Brain microvascular endothelial cell (primary cell): ENCODE measurements at regions of chr2 and their contacts with region 1.

Region 1: GRCh38 chr2:171160119-171160955 is at the start of gene TLK1:
- DNase-seq: peak; percentile 41
- H3K4me3 ChIP-seq: peak within 1 kb of the TSS; percentile 83
- H3K27ac ChIP-seq: peak within 1 kb of the TSS; percentile 93
- H3K27me3 ChIP-seq: no peaks in the 10 kb centered on the region
- CTCF ChIP-seq: no peak

Region 2: DNA sequence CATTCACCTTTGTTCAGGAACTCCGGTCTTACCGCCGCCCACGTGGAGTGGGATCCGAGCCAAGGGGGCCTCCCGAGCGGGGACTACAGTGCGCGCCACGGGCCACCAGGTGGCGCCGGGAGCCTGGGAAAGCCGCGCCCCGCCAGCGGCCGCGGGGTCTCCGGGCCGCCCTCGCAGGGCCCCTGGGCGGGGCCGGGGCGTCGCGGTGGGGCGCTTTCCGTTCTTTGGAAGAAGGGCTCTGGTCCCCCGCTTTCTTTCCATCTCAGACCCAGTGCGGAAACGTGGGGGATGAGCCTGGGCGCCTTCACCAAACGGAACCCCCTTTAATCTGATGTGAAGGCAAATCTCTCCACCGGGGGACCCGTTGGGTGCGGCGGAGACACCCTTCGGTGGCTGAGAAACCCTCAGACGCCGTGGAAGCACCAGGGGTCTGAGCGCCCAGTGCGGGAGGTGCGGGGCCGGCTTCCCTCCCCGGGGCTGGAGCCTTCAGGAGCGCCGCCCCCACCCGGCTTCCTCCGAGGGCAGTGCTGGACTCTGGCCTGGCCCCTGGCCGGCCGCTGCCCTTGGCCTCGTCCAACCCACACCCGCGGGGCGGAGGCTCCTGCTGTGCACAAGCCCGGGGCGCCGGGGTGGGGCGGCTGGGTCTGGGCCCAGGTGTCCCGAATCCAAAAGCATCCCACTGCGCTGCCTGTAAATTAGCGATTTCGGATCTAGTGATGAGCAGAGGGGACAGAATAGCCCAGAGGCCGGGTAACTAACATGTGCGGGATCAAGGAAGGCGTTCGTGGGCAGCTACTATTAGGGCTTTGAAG is 186.6 kb before region 1 on chr2:
- in situ Hi-C with region 1: loop called (anchors 25 kb)
- DNase-seq: peak; percentile 52
- H3K4me3 ChIP-seq: peak overlapping the region; percentile 69
- H3K27ac ChIP-seq: peak overlapping the region; percentile 69
- H3K27me3 ChIP-seq: no peaks in the 10 kb centered on the region
- CTCF ChIP-seq: peak; percentile 73

Region 3: GRCh38 chr2:171416009-171416926 is 255.9 kb after region 1 on chr2:
- in situ Hi-C with region 1: loop called (anchors 25 kb)
- DNase-seq: peak; percentile 97
- H3K4me3 ChIP-seq: no peak overlapping the region
- H3K27ac ChIP-seq: no peak overlapping the region
- H3K27me3 ChIP-seq: no peaks in the 10 kb centered on the region
- CTCF ChIP-seq: peak; percentile 96